PC-9 (cell line): ENCODE measurements at regions of chr10 and their contacts with region 1.

Region 1: GRCh38 chr10:77504873-77505257 is 132.7 kb downstream of the KCNMA1 start:
- DNase-seq: peak; percentile 61 to 88
- H3K4me3 ChIP-seq: no peak overlapping the region
- H3K27ac ChIP-seq: peak overlapping the region; percentile 98
- H3K4me1 ChIP-seq: peaks cover 63% of the 10 kb centered on the region
- H3K27me3 ChIP-seq: no peaks in the 10 kb centered on the region
- CTCF ChIP-seq: peak; percentile 64; the same call in 1 of the 2 replicates

Region 2: GRCh38 chr10:77251297-77252013 is 253.4 kb before region 1 on chr10:
- CTCF ChIA-PET with region 1: no interaction called
- POLR2A ChIA-PET with region 1: interaction called, 24 read pairs
- intact Hi-C with region 1: no loop called
- DNase-seq: peak; percentile 29 to 34
- H3K4me3 ChIP-seq: no peak overlapping the region
- H3K27ac ChIP-seq: no peak overlapping the region
- H3K4me1 ChIP-seq: no peaks in the 10 kb centered on the region; the same call in 1 of the 2 replicates
- H3K27me3 ChIP-seq: no peaks in the 10 kb centered on the region
- CTCF ChIP-seq: peak; percentile 79

Region 3: GRCh38 chr10:77416311-77417135 is 88.3 kb before region 1 on chr10:
- CTCF ChIA-PET with region 1: no interaction called
- POLR2A ChIA-PET with region 1: no interaction called
- intact Hi-C with region 1: loop called (anchors 2 kb)
- DNase-seq: peak; percentile 73 to 96
- H3K4me3 ChIP-seq: peak overlapping the region; percentile 14; the same call in 1 of the 2 replicates
- H3K27ac ChIP-seq: peak overlapping the region; percentile 82
- H3K4me1 ChIP-seq: peaks cover 36% of the 10 kb centered on the region
- H3K27me3 ChIP-seq: no peaks in the 10 kb centered on the region
- CTCF ChIP-seq: no peak

Region 4: GRCh38 chr10:77531441-77532001 is 26.7 kb after region 1 on chr10:
- CTCF ChIA-PET with region 1: no interaction called
- POLR2A ChIA-PET with region 1: interaction called, 3 read pairs
- intact Hi-C with region 1: loop called (anchors 2 kb)
- DNase-seq: peak; percentile 45 to 79
- H3K4me3 ChIP-seq: no peak overlapping the region
- H3K27ac ChIP-seq: peak overlapping the region; percentile 61
- H3K4me1 ChIP-seq: peaks cover 46% of the 10 kb centered on the region
- H3K27me3 ChIP-seq: no peaks in the 10 kb centered on the region
- CTCF ChIP-seq: no peak